ENCODE measurements at regions of chr1 and their contacts with region 1.

Region 1: GRCh38 chr1:10143961-10144485 is 66.3 kb upstream of the KIF1B start:
- DNase-seq: no peak
- H3K4me3 Mint-ChIP-seq: no peak overlapping the region
- H3K27ac Mint-ChIP-seq: no peak overlapping the region
- H3K4me1 Mint-ChIP-seq: no peaks in the 10 kb centered on the region
- H3K27me3 Mint-ChIP-seq: no peaks in the 10 kb centered on the region

Region 2: DNA sequence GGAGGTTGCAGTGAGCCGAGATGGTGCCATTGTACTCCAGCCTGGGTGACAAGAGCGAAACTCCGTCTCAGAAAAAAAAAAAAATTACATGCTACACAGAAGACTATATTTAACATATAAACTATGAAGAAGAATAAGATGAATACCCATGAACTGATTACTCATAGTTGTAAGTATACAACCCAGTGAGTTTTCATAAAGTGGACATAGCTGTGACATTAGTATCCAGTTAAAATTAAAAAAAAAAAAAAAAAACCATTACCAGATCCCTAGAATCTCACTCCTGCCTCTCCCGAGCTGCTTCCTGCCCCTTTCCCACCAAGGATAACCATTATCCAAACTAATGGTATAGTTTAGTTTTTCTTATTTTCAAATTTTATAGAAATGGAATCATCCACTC is 73.8 kb before region 1 on chr1:
- CTCF ChIA-PET with region 1: interaction called, 3 read pairs
- POLR2A ChIA-PET with region 1: interaction called, 13 read pairs
- DNase-seq: no peak
- H3K4me3 Mint-ChIP-seq: no peak overlapping the region
- H3K27ac Mint-ChIP-seq: no peak overlapping the region
- H3K4me1 Mint-ChIP-seq: peaks cover 19% of the 10 kb centered on the region
- H3K27me3 Mint-ChIP-seq: no peaks in the 10 kb centered on the region

Region 3: DNA sequence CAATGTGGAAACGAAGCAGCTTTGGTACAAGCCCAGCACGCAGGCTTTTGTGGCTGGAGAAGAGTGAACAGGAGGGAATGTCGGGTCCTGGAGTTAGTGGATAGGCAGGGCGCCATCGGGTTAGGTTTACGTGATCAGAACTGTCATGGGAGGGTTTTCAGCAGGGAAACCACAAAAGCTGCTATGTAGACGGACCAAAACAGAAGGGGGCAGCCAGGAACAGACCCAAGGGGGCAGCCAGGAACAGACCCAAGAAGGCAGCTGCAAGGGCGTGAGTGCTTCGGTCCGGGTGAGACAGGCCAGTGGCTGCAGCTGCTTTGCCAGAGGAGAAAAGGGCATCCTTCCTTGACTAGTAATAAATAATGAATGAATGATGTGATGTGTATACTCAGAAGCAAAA is 11.2 kb before region 1 on chr1:
- CTCF ChIA-PET with region 1: no interaction called
- POLR2A ChIA-PET with region 1: no interaction called
- DNase-seq: no peak
- H3K4me3 Mint-ChIP-seq: no peak overlapping the region
- H3K27ac Mint-ChIP-seq: no peak overlapping the region
- H3K4me1 Mint-ChIP-seq: no peaks in the 10 kb centered on the region
- H3K27me3 Mint-ChIP-seq: no peaks in the 10 kb centered on the region

Measured in activated CD4-positive, alpha-beta T cell treated with anti-CD3 and anti-CD28 coated beads, Interleukin-2, amount 10 ng/mL, durations not matched to agents 7 days and 5 days (primary cell).